MCF 10A (cell line): ENCODE measurements at regions of chr6 and their contacts with region 1.

Region 1: GRCh38 chr6:152552616-152553209 is 84.4 kb downstream of the SYNE1 start:
- DNase-seq: peak; percentile 81
- H3K4me3 Mint-ChIP-seq: no peak overlapping the region
- H3K27ac Mint-ChIP-seq: no peak overlapping the region
- H3K4me1 Mint-ChIP-seq: no peaks in the 10 kb centered on the region
- H3K27me3 Mint-ChIP-seq: no peaks in the 10 kb centered on the region
- CTCF ChIP-seq: peak; percentile 84

Region 2: GRCh38 chr6:152441902-152442301 is 110.8 kb before region 1 on chr6:
- CTCF ChIA-PET with region 1: no interaction called
- POLR2A ChIA-PET with region 1: no interaction called
- intact Hi-C with region 1: no loop called
- DNase-seq: no peak
- H3K4me3 Mint-ChIP-seq: no peak overlapping the region
- H3K27ac Mint-ChIP-seq: no peak overlapping the region
- H3K4me1 Mint-ChIP-seq: no peaks in the 10 kb centered on the region
- H3K27me3 Mint-ChIP-seq: no peaks in the 10 kb centered on the region
- CTCF ChIP-seq: no peak

Region 3: DNA sequence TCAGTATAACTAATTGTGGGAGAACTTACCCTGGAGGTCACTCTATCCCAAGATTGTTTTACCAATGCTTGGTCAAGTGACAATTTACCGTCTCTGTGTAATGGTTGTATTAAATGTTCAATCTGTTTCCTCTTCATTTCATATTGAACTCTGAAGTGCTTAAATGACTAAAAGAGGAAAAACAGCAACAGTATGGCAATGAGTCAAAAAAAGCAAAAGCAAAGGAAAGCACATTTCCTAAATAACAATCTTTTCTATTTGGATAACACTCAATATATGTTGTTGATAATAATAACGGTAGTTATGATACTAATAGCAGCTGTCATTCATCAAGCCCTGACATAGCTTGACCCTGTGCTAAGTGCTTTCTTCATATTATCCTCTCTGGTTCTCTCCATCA is 67.9 kb before region 1 on chr6:
- CTCF ChIA-PET with region 1: interaction called, 28 read pairs
- POLR2A ChIA-PET with region 1: no interaction called
- intact Hi-C with region 1: loop called (anchors 1 kb)
- DNase-seq: no peak
- H3K4me3 Mint-ChIP-seq: no peak overlapping the region
- H3K27ac Mint-ChIP-seq: no peak overlapping the region
- H3K4me1 Mint-ChIP-seq: no peaks in the 10 kb centered on the region
- H3K27me3 Mint-ChIP-seq: no peaks in the 10 kb centered on the region
- CTCF ChIP-seq: no peak

Region 4: DNA sequence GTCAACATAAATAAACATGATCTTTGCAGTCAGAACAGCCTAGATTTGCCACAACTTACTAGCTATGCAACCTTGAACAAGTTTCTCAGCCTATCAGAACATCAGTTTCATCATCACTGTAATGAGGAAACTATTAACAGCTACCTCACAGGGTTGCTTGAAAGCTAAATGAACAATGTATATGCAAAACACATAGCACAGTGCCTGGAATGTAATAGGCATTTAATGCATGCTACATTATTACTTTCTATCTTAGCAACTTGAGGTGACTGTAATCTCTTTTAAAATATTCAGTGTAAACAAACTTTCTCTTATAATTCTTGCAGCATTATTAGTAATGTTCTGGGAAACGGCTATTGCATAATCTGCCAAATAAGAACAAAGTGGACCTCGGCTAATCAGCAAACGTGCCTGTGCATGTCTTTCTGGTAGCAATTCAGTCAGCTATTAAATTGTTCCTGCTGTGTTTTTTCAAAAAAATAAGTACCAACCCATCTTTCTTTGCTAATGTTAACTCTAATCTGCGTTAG is 23.0 kb after region 1 on chr6:
- CTCF ChIA-PET with region 1: interaction called, 18 read pairs
- POLR2A ChIA-PET with region 1: interaction called, 11 read pairs
- intact Hi-C with region 1: no loop called
- DNase-seq: peak; percentile 89
- H3K4me3 Mint-ChIP-seq: peak overlapping the region; percentile 36
- H3K27ac Mint-ChIP-seq: peak overlapping the region; percentile 94
- H3K4me1 Mint-ChIP-seq: peaks cover 50% of the 10 kb centered on the region
- H3K27me3 Mint-ChIP-seq: no peaks in the 10 kb centered on the region
- CTCF ChIP-seq: no peak

Region 5: DNA sequence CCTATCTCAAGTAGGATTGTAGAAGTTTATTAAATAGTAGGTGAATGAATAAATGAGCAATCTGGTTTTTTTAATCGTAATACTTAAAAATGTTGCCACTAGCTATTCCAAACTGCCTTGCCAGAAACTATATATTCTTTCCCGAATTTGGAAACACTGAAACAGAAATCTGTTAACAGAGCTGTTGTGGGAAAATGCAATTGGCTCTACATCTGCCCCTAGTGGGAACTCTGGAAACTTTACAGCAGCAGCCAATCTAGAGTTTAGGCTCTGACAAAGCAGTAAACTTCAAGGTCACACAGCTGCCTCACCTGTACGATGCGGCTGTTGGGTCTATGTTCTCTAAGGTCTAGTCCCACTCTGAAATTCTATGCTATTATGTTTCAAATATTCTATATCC is 42.8 kb after region 1 on chr6:
- CTCF ChIA-PET with region 1: interaction called, 7 read pairs
- POLR2A ChIA-PET with region 1: interaction called, 3 read pairs
- intact Hi-C with region 1: loop called (anchors 5 kb)
- DNase-seq: peak; percentile 19
- H3K4me3 Mint-ChIP-seq: no peak overlapping the region
- H3K27ac Mint-ChIP-seq: no peak overlapping the region
- H3K4me1 Mint-ChIP-seq: peaks cover 7% of the 10 kb centered on the region
- H3K27me3 Mint-ChIP-seq: no peaks in the 10 kb centered on the region
- CTCF ChIP-seq: peak; percentile 34

Region 6: GRCh38 chr6:152669895-152670294 is 117.2 kb after region 1 on chr6:
- CTCF ChIA-PET with region 1: interaction called, 60 read pairs
- POLR2A ChIA-PET with region 1: interaction called, 3 read pairs
- intact Hi-C with region 1: loop called (anchors 1 kb)
- DNase-seq: peak; percentile 42
- H3K4me3 Mint-ChIP-seq: no peak overlapping the region
- H3K27ac Mint-ChIP-seq: no peak overlapping the region
- H3K4me1 Mint-ChIP-seq: no peaks in the 10 kb centered on the region
- H3K27me3 Mint-ChIP-seq: no peaks in the 10 kb centered on the region
- CTCF ChIP-seq: peak; percentile 42

Region 7: DNA sequence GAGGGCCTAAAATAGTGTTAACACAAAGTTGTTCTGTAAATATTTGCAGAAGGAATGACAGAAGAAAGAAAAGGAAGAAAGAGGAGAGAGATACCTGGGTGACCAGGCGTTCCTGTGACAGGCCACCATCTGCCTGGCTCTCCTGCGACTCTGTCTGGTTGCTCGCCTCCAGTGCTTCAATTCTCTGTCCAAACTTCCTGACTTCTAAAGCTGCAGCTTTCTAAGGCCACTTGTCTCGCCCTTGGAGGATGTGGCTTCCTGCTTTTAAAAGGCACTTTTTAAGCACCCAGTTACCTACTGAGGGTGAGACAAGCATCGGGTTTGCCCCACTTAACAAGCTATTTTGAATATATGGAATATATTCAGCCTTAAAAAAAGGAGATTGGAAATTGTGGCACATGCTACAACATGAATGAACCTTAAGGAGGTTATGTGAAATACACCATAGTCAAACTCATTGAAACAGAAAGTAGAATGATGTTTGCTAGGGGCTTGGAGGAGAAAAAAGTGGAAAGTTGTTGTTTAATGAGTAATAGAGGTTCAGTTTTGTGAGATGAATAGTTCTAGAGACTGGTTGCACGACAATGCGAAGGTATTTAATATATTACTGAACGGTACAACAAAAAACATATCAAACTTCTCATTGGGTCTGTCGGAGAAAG is 230.6 kb after region 1 on chr6:
- CTCF ChIA-PET with region 1: no interaction called
- POLR2A ChIA-PET with region 1: no interaction called
- intact Hi-C with region 1: no loop called
- DNase-seq: no peak
- H3K4me3 Mint-ChIP-seq: no peak overlapping the region
- H3K27ac Mint-ChIP-seq: no peak overlapping the region
- H3K4me1 Mint-ChIP-seq: no peaks in the 10 kb centered on the region
- H3K27me3 Mint-ChIP-seq: peaks cover 55% of the 10 kb centered on the region
- CTCF ChIP-seq: no peak